Endothelial cell of umbilical vein (primary cell): ENCODE measurements at regions of chr9 and their contacts with region 1.

Region 1: DNA sequence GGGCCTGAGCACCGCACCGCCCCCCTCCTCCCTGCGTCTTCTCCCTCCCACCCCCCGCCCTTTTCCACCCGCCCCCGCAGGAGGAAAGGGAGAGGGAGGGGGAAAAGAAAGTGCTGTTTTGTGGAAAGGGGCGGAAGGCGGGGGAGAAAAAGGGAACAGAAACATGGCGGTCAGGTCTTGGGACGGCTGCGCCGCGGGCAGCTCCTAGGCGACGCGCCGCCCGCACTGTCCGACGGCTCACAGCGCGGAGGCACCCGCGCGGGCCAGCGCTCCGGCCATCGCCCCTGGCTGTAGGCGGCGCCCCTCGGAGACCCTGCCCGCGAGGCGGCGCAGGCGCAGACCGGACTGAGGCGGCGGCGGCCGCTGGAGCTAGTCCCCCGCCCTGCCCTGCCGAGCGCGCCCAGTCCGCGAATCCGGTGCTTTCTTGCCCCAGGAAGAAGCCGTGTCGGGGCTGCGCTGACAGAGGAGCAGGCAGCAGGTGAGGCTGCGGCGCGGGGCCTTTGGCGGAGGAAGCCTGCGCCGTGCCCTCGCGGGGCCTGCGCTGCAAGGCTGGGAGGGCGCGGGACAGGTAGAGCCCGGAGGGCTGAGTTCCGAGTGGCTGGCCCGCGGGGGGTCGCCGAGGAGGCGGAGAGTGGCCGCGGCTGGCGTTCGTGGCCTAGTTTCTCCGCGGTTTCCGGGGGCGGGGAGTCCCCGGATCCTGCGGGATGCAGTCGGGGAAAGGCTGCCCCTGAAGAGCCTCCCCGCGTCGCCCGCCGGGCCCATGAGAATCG is at the start of gene DENND4C:
- DNase-seq: peak; percentile 90
- H3K4me3 ChIP-seq: peak within 1 kb of the TSS; percentile 65 to 99 (median 97)
- H3K27ac ChIP-seq: peak within 1 kb of the TSS; percentile 86
- H3K4me1 ChIP-seq: peaks cover 19% of the 10 kb centered on the region
- H3K27me3 ChIP-seq: no peaks in the 10 kb centered on the region
- CTCF ChIP-seq: no peak
- POLR2A ChIP-seq: peak; percentile 87
- total RNA-seq, gene DENND4C: 36.5 and 36.8 TPM in 2 replicates

Region 2: DNA sequence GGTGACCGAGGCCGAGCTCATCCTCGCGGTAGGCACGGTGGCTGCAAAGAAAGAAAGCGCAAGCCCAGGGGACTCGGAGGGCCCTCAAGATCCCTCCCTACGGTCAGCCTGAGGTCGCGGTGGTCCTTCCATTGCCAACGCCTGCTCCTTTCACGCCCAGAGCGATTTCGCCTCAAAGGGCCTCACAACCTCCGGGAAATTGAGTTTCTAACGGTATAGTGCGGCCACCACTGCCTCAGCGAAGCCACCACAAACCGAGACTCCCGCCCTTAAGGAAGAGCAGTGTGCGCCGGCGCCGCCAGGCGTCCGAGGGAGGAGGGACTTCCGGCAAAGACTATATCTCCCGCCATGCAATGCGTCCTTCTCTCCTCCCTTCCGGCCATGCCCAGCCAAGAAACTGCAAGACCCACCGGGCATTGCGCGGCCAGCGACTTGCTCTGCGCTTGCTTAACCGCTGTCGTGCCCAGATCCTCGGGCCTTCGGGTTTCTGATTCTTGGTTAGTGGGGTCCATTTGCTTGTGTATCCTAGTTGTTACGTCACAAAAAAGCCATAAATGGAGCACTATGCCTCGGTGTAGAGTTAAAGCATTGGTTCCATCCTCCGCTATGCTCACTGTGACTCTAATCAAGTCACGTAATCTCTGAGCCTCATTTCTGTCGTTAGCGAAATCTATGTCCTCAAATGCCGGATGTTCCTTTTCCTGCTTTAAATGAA is 127.8 kb before region 1 on chr9 and contains the start of gene HAUS6:
- CTCF ChIA-PET with region 1: no interaction called
- POLR2A ChIA-PET with region 1: no interaction called
- dilution Hi-C with region 1: no loop called
- intact Hi-C with region 1: loop called (anchors 2 kb)
- DNase-seq: peak; percentile 98
- H3K4me3 ChIP-seq: peak within 1 kb of the TSS; percentile 85 to 93 (median 87)
- H3K27ac ChIP-seq: peak within 1 kb of the TSS; percentile 52
- H3K4me1 ChIP-seq: peaks cover 8% of the 10 kb centered on the region
- H3K27me3 ChIP-seq: no peaks in the 10 kb centered on the region
- CTCF ChIP-seq: peak; percentile 7 to 63
- POLR2A ChIP-seq: peak; percentile 85
- total RNA-seq, gene HAUS6: 18.9 and 19.6 TPM in 2 replicates

Region 3: DNA sequence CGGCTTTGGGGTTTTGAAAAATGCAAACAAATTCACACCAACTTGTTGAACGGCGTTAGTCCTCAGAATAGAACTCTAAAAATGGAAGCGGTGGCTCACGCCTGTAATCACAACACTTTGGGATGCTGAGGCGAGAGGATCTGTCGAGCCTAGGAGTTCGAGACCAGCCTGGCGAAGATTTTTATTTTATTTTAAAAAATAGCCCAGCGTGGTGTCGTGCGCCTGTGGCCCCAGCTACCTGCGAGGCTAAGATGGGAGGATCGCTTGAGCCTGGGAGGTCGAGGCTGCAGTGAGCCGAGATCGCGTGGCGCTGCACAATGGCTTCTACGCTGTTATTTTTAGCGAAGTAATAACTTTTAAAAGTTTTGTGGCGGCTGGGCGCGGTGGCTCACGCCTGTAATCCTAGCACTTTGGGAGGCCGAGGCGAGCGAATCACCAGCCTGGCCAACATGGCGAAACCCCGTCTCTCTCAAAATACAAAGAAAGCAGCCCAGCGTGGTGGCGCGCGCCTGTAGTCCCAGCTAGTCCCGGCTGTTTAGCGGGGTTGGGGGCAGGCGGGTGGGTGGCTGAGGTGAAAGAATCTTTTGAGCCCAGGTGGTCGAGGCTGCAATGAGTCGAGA is 102.5 kb before region 1 on chr9:
- CTCF ChIA-PET with region 1: interaction called, 3 read pairs
- POLR2A ChIA-PET with region 1: interaction called, 5 read pairs
- dilution Hi-C with region 1: no loop called
- intact Hi-C with region 1: loop called (anchors 2 kb)
- DNase-seq: peak; percentile 59
- H3K4me3 ChIP-seq: peak overlapping the region; percentile 43 to 87 (median 75)
- H3K27ac ChIP-seq: peak overlapping the region; percentile 76
- H3K4me1 ChIP-seq: peaks cover 29% of the 10 kb centered on the region
- H3K27me3 ChIP-seq: no peaks in the 10 kb centered on the region
- CTCF ChIP-seq: no peak
- POLR2A ChIP-seq: no peak

Region 4: GRCh38 chr9:19192202-19193028 is 38.1 kb before region 1 on chr9:
- CTCF ChIA-PET with region 1: no interaction called
- POLR2A ChIA-PET with region 1: interaction called, 6 read pairs
- dilution Hi-C with region 1: no loop called
- intact Hi-C with region 1: loop called (anchors 1 kb)
- DNase-seq: peak; percentile 58
- H3K4me3 ChIP-seq: peak overlapping the region in 1 of 3 experiments; percentile 51
- H3K27ac ChIP-seq: peak overlapping the region; percentile 58
- H3K4me1 ChIP-seq: peaks cover 20% of the 10 kb centered on the region
- H3K27me3 ChIP-seq: no peaks in the 10 kb centered on the region
- CTCF ChIP-seq: no peak
- POLR2A ChIP-seq: no peak

Region 5: DNA sequence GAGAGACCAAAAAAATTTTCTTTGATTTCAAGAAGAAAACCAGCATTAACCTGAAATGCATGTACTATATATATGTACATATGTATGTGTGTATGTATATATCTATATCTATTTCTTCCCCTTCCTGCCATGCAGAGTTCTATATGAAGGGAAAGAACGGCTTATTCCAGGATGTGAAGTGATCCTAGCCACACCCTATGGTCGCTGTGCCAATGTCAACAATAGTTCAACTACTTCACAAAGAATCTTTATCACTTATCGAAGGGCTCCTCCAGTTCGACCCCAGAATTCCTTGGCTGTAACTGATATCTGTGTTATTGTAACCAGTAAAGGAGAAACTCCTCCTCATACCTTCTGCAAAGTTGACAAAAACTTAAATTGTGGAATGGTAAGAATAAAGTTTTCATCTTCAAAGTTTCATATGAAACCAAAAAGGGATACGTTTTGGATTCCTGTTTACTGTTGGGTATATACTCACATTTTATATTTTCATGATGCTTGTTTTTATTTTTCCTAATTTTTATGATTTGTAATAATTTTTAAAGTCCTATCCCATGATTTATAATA is 56.2 kb after region 1 on chr9:
- CTCF ChIA-PET with region 1: interaction called, 3 read pairs
- POLR2A ChIA-PET with region 1: no interaction called
- dilution Hi-C with region 1: no loop called
- intact Hi-C with region 1: loop called (anchors 5 kb)
- DNase-seq: peak; percentile 48
- H3K4me3 ChIP-seq: peak overlapping the region in 1 of 3 experiments; percentile 32
- H3K27ac ChIP-seq: no peak overlapping the region
- H3K4me1 ChIP-seq: peaks cover 13% of the 10 kb centered on the region
- H3K27me3 ChIP-seq: no peaks in the 10 kb centered on the region
- CTCF ChIP-seq: no peak
- POLR2A ChIP-seq: no peak

Region 6: GRCh38 chr9:19379697-19380046 is 149.1 kb after region 1 on chr9:
- CTCF ChIA-PET with region 1: no interaction called
- POLR2A ChIA-PET with region 1: no interaction called
- dilution Hi-C with region 1: no loop called
- intact Hi-C with region 1: loop called (anchors 2 kb)
- DNase-seq: peak; percentile 69
- H3K4me3 ChIP-seq: peak overlapping the region; percentile 84 to 94 (median 93)
- H3K27ac ChIP-seq: peak overlapping the region; percentile 62
- H3K4me1 ChIP-seq: peaks cover 37% of the 10 kb centered on the region
- H3K27me3 ChIP-seq: no peaks in the 10 kb centered on the region
- CTCF ChIP-seq: no peak
- POLR2A ChIP-seq: no peak

Region 7: DNA sequence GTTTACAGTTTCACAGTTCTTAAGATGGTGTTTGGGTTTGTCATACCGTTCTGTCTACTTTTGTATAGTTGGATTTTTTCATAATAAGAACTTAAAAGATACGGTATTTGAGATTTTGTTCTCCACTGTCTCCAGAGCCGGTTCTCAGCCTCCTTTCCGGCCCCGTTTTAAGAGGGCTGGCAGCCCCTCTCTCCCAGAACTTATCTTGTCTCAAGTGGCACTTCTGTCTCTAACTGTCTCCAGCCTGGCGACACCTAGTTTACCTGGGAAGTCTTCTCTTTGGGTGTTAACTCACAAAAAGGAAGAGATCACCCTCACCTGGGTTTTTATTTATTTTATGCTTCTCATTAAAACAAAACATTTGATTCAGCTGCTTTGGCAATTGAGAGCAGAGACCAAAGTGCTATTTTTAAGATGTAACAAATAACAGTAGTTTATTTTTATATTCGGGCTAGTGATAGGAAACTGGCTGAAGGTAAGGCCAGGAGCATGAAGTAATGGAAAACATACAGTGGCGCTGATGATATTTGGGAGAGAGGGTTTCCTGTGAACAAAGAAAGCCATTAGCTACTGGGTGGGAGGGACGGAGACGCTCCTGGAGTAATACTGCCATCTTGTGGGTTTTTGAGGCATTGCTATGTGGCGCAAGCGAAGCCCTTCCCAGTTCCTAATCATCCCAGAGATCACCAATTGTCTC is 226.6 kb after region 1 on chr9:
- CTCF ChIA-PET with region 1: interaction called, 15 read pairs
- POLR2A ChIA-PET with region 1: no interaction called
- dilution Hi-C with region 1: no loop called
- intact Hi-C with region 1: loop called (anchors 1 kb)
- DNase-seq: peak; percentile 80
- H3K4me3 ChIP-seq: no peak overlapping the region
- H3K27ac ChIP-seq: no peak overlapping the region
- H3K4me1 ChIP-seq: peaks cover 6% of the 10 kb centered on the region
- H3K27me3 ChIP-seq: no peaks in the 10 kb centered on the region
- CTCF ChIP-seq: peak; percentile 88 to 93
- POLR2A ChIP-seq: no peak